ENCODE measurements at regions of chr2 and their contacts with region 1.

Region 1: DNA sequence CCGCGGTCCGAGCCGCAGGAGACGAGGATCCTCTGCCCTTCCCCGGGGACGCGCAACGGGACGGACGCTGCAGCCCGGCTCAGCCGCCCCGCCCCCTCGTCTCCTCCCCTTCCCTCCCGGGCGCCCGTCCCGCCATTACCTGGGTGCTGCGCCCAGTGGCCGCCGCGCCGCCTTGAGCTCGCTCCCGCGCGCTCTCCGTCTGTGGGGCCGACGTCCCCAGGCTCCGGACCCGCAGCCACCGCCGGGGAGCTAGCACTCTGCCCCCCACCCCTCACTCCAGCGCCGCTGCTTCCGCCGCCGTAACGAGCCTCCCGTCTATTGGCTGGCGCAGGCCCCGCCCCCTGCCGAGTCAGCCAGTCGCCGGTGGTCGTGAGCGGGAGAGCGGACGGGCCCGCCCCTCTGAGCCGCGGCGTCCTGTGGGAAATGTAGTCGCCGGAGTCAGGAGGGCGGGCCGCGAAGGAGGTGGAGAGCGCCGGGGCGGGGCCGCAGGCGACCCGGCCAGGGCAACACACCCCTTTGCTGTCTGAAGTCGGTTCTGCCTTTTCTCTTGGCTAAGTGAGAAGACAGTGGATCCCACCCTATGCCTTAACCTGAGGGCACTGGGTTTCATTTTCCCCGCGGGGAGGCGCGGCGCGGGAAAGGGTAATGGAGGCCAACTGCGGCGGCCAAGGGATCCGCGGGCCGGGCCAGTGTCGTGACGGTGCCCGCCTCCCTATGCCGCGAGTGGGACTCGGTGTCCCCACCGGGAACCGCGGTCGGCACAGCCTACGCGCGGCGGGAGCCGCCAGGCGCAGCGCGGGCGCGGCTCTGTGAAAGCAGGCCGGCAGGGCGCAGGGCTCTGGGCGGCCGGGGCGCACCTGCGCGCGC is at the start of gene SAP130:
- DNase-seq: peak; percentile 100
- ATAC-seq: peak; percentile 94
- total RNA-seq, gene SAP130: 13.9 TPM

Region 2: GRCh38 chr2:127884436-127885345 is 143.3 kb before region 1 on chr2:
- intact Hi-C with region 1: loop called (anchors 5 kb)
- DNase-seq: no peak
- ATAC-seq: no peak

Region 3: DNA sequence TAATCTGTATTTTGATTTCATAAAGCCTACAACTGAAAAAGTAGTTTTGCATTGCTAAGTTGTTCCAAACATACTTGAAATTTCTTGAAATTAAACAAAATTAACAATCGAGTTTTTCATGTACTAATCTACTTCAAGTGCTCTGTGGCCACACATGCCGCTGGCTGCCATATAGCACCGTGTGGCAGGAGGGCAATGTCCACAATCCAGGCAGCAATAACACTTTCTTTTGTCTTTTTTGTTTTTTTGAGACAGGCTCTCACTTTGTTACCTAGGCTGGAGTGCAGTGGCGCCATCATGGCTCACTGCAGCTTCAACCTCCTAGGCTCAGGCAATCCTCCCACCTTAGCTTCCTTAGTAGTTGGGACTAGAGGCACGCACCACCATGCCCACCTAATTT is 36.3 kb before region 1 on chr2:
- intact Hi-C with region 1: loop called (anchors 5 kb)
- DNase-seq: no peak
- ATAC-seq: no peak

Region 4: DNA sequence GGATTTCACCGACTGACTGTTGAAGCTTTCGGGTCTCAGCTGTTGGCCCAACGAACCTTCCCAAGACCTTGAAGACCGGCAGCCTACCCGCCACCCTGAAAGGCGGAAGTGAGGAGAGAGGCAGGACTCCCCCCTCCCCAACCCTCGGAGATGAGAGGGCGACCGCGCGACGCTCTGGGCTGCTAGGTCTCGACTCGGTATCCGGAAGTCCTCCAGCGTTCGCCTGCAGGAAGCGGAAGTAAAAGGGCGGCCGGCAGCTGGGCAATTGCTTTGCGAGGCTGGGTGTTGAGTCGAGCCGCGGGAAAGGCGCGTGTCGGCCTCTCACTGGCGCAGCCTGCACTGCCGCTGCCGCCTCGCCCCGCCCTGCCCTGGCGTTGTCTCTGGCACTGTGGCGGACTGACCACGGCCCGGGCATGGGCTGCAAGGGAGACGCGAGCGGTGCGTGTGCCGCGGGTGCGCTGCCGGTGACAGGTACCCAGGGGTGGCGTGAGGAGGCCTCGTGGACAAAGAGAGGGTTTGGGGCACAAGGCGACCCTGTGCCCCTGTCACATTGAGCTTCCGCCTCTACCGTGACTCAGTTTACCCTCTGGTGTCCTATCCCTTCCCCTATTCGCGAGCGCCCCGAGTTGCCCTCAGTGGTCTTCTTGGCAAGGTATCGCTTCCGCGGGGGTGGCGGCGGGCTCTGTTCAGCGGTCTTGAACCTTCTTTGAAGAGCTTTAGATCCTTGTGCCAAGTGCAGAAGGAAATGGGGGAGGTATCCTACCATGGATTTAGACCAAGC is 63.1 kb after region 1 on chr2 and contains the start of gene UGGT1:
- intact Hi-C with region 1: loop called (anchors 2 kb)
- DNase-seq: peak; percentile 97
- ATAC-seq: peak; percentile 100
- total RNA-seq, gene UGGT1: 24.3 TPM

Measured in Right ventricle myocardium inferior (tissue), 1 donor.